RWPE1 (cell line): ENCODE measurements at regions of chr3 and their contacts with region 1.

Region 1: GRCh38 chr3:169822983-169823382 is 10.3 kb upstream of the LRRC34 start:
- DNase-seq: no peak
- H3K27ac ChIP-seq: no peak overlapping the region
- CTCF ChIP-seq: no peak

Region 2: DNA sequence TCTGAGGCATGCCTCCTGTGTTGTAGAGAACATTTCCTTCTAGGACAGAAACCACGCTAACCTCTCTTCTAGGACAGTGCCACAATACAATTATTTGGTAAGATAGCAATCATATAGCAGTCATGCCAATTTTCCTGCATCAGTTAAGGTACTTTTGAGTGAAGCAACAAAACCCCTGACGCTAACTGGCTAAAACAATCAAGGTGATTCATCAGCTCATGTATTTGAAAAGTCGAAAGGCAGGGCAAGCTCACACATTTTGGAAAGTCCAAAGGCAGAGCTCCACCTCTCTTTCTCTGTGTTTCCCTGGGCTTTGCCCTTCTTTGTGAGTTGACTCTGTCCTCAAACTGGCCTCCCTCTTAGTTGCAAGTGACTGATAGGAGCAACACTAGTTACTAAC is 68.3 kb before region 1 on chr3:
- CTCF ChIA-PET with region 1: no interaction called
- POLR2A ChIA-PET with region 1: no interaction called
- DNase-seq: no peak
- H3K27ac ChIP-seq: no peak overlapping the region
- CTCF ChIP-seq: no peak

Region 3: DNA sequence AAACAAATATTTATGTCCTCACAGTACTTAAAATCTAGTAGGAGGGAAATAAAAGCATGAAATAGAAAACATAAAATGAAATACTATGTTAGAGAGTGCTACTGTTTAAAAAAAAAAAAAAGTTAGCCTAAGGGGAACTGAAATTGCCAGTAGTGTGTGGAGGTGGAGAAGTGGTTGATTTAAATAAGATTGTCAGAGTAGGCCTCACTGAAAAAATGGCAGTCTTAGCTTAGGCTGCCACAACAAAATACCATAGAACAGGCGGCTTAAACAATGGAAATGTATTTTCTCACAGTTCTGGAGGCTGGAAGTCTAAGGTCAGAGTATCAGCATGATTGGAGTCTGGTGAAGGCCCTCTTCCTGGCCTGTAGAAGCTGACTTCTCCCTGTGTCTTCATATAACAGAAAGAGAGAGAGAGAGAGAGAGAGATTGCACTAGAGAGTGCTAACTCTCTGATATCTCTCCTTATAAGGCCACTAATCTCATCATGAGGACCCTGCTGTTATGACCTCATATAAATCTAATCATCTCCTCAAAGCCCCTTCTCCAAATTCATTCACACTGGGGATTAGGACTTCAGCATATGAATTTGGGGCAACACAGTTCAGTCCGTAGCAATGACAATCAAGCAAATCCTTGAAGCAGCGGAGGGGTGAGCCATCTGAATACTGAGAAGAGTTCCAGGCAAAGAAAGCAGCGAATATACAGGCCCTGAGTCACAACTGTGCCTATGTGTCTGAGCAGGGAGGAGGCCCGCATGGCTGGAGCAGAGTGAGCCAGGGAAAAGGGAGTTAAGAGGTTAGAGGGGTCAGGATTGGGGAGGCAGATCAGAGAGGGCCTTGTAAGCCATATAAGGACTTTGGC is 13.3 kb after region 1 on chr3:
- CTCF ChIA-PET with region 1: no interaction called
- POLR2A ChIA-PET with region 1: no interaction called
- DNase-seq: no peak
- H3K27ac ChIP-seq: no peak overlapping the region
- CTCF ChIP-seq: no peak

Region 4: GRCh38 chr3:169980055-169980454 is 157.1 kb after region 1 on chr3:
- CTCF ChIA-PET with region 1: no interaction called
- POLR2A ChIA-PET with region 1: no interaction called
- DNase-seq: no peak
- H3K27ac ChIP-seq: no peak overlapping the region
- CTCF ChIP-seq: no peak

Region 5: DNA sequence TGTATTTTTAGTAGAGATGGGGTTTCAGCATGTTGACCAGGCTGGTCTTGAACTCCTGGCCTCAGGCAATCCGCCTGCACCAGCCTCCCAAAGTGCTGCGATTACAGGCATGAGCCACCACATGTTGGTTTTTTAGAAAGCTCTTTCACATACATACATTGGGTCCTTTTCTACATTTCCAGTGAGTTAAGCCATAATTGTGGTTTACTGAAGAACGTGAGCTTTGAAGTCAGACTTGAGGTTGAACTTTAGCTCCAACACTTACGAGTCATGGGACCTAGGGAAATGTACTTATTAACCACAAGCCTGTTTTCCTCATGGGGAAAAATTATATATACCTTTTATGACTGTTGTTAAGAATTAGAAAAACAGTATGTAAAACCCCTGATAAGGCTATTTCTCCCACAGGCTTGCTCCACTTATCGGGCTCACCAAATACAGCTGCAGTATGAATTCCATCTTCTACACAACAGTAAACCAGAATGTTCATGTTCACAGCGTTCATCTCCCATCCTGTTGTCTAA is 253.8 kb after region 1 on chr3:
- CTCF ChIA-PET with region 1: no interaction called
- POLR2A ChIA-PET with region 1: interaction called, 10 read pairs
- DNase-seq: no peak
- H3K27ac ChIP-seq: no peak overlapping the region
- CTCF ChIP-seq: no peak